CD4-positive, alpha-beta T cell (primary cell): ENCODE measurements at regions of chr3 and their contacts with region 1.

Region 1: GRCh38 chr3:180923561-180923960 is 11.1 kb downstream of the FXR1 start:
- DNase-seq: no peak
- ATAC-seq: no peak
- H3K4me3 ChIP-seq: no peak overlapping the region
- H3K4me3 Mint-ChIP-seq: no peak overlapping the region
- H3K27ac ChIP-seq: no peak overlapping the region
- H3K27ac Mint-ChIP-seq: peak overlapping the region; percentile 33
- H3K4me1 ChIP-seq: peaks cover 25% of the 10 kb centered on the region
- H3K4me1 Mint-ChIP-seq: peaks cover 90% of the 10 kb centered on the region
- H3K27me3 ChIP-seq: no peaks in the 10 kb centered on the region
- H3K27me3 Mint-ChIP-seq: no peaks in the 10 kb centered on the region
- CTCF ChIP-seq: no peak

Region 2: DNA sequence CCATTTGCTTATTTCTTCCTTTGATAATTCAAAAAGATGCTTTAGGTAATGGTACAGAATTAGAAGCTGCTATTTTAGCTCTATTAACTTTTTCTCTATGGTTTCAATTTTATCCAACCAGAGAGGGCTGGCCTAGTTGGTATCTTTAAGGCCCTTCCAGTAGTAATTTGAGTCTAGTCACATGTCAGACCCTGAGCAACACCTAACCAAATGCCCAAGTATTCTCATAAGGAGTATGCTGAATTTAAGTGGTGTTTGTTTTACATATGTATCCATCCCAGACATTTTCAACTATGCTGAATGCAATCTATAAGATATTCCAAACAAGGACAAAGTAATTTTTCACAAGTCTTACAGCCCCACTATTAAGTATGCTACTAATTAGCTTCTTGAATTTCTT is 56.4 kb after region 1 on chr3:
- CTCF ChIA-PET with region 1: no interaction called
- POLR2A ChIA-PET with region 1: no interaction called
- intact Hi-C with region 1: loop called in 1 of 2 experiments (anchors 5 kb)
- DNase-seq: no peak
- ATAC-seq: no peak
- H3K4me3 ChIP-seq: no peak overlapping the region
- H3K4me3 Mint-ChIP-seq: no peak overlapping the region
- H3K27ac ChIP-seq: no peak overlapping the region
- H3K27ac Mint-ChIP-seq: peak overlapping the region; percentile 45
- H3K4me1 ChIP-seq: no peaks in the 10 kb centered on the region
- H3K4me1 Mint-ChIP-seq: peaks cover 17% of the 10 kb centered on the region
- H3K27me3 ChIP-seq: no peaks in the 10 kb centered on the region
- H3K27me3 Mint-ChIP-seq: no peaks in the 10 kb centered on the region
- CTCF ChIP-seq: no peak